ENCODE measurements at regions of chr2 and their contacts with region 1.

Region 1: DNA sequence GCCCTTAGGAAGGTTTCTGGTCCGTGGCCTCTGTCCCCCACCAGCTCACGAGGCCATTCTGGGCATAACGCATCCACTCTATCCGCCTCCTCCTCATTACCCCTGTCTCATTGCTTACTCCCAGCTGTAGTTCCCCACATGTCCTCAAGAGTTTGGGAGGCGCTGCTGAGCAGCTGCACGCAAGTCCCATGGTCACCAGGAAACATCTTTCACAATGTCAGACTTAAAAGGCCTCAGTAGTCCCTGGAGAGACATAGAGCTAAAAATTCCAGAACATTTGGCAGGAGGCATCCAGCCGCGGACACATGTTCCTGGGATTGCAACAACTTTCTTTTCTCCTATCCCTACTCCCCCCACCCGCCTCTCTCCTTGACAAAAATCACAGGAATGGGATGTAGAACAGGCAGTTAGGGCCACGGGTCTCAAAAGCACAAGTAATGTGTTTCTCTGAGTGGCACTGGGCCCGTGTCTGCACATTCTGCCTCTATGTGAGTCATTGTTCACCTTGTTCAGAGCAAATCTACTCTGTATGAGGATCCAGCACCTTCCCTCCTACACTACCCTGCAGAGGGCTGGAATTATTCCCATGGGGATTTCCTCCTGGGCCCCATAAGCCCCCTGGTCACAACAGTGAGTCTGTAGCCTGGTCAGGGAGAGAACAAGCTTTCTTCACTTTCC is 8.1 kb downstream of the LBH start:
- DNase-seq: peak; percentile 82
- ATAC-seq: peak; percentile 42
- H3K4me3 Mint-ChIP-seq: peak overlapping the region; percentile 46
- H3K27ac Mint-ChIP-seq: peak overlapping the region; percentile 82
- H3K4me1 Mint-ChIP-seq: peaks cover 88% of the 10 kb centered on the region
- H3K27me3 Mint-ChIP-seq: no peaks in the 10 kb centered on the region

Region 2: GRCh38 chr2:30252723-30253701 is 13.6 kb after region 1 on chr2:
- CTCF ChIA-PET with region 1: interaction called, 268 read pairs
- POLR2A ChIA-PET with region 1: interaction called, 6 read pairs
- DNase-seq: peak; percentile 69
- ATAC-seq: peak; percentile 65
- H3K4me3 Mint-ChIP-seq: peak overlapping the region; percentile 9
- H3K27ac Mint-ChIP-seq: peak overlapping the region; percentile 75
- H3K4me1 Mint-ChIP-seq: peaks cover 89% of the 10 kb centered on the region
- H3K27me3 Mint-ChIP-seq: no peaks in the 10 kb centered on the region

Region 3: DNA sequence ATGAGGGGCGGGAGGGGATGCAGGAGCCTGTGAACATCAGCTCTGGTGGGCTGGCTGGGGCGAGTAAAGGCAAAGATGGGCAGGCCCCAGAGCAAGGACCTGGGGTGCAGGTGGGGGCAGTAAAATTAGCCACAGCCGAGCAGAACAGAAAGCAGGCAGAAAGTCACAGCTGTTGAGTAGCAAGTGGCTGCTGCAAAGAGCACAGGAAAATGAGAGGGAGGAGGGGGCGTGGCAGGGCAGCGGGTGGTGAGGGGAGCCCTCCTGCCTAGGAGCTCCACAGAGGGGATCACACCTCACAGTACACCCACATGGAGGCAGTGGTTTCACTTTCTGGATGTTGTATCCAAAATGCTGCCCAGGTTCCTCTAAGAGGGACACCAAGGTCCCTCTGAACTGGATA is 71.5 kb after region 1 on chr2:
- CTCF ChIA-PET with region 1: interaction called, 15 read pairs
- POLR2A ChIA-PET with region 1: no interaction called
- DNase-seq: no peak
- ATAC-seq: peak; percentile 30
- H3K4me3 Mint-ChIP-seq: no peak overlapping the region
- H3K27ac Mint-ChIP-seq: peak overlapping the region; percentile 73
- H3K4me1 Mint-ChIP-seq: peaks cover 40% of the 10 kb centered on the region
- H3K27me3 Mint-ChIP-seq: no peaks in the 10 kb centered on the region

Region 4: DNA sequence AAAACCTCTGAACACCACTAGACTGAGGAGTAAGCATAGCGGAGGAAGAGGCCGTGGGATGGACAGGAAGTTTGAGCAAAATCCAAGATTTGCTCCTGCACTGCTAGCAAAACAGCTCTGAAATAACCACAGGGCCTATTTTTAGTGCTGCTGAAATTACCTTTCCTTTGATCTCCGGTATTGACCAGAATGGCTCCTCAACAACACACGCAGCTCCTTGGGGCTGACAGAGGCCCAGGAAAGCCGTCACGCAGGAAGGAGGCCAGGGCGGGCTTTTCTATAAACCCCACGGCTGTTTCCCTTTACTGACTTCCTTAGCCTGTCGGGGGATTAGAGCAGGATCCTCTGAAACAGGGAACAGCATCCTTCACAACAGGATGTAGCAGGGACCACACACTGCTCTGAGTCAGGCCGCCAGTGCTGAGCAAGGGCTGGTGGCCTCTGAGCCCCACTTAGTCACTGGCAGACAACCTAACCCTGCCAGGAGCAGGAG is 126.8 kb after region 1 on chr2:
- CTCF ChIA-PET with region 1: interaction called, 13 read pairs
- POLR2A ChIA-PET with region 1: no interaction called
- DNase-seq: peak; percentile 49
- ATAC-seq: peak; percentile 78
- H3K4me3 Mint-ChIP-seq: no peak overlapping the region
- H3K27ac Mint-ChIP-seq: peak overlapping the region; percentile 63
- H3K4me1 Mint-ChIP-seq: peaks cover 42% of the 10 kb centered on the region
- H3K27me3 Mint-ChIP-seq: no peaks in the 10 kb centered on the region

Region 5: DNA sequence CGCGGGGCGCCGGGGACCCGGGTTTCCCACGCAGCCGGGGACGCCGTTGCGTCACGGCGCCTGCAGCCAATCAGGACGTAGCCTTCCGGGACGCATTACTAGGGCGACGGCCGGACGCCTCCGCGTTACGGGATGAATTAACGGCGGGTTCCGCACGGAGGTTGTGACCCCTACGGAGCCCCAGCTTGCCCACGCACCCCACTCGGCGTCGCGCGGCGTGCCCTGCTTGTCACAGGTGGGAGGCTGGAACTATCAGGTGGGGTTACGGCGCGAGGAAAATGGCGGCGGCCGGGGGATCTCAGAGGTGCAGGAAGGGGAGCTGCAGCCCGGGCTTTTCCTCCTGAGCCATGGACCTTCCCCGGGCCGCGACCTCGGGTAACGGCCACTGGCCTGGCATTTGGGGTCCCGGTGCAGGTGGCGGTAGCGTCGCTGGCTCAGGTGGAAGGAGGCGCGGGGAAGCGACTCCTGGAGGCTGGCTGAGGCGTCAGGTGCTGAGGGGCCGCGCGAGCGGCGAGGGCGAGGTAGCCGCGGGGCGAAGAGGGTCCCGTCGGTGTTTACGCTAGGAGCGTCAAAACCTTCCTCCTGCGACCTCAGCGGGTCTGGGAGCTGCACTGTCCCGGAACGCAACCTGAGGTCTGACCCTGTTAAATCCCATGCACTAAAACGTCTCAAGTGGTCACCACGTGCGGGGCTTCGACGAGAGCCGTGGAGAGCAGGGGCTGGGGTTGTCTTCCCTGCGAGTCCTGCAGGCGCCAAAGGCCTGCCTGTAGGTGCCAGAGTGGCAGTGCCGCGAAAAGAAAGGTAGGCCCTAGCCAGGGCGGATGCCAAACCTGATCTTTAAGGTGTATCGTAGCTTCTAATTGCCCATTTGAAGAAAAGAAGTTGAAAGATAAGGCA is 207.9 kb after region 1 on chr2 and contains the start of gene LCLAT1:
- CTCF ChIA-PET with region 1: interaction called, 22 read pairs
- POLR2A ChIA-PET with region 1: interaction called, 24 read pairs
- DNase-seq: peak; percentile 86
- ATAC-seq: peak; percentile 95
- H3K4me3 Mint-ChIP-seq: peak within 1 kb of the TSS; percentile 93
- H3K27ac Mint-ChIP-seq: peak within 1 kb of the TSS; percentile 97
- H3K4me1 Mint-ChIP-seq: peaks cover 27% of the 10 kb centered on the region
- H3K27me3 Mint-ChIP-seq: no peaks in the 10 kb centered on the region
- total RNA-seq, gene LCLAT1: 25.1 to 25.3 TPM

Region 6: GRCh38 chr2:30499681-30500080 is 260.2 kb after region 1 on chr2:
- CTCF ChIA-PET with region 1: no interaction called
- POLR2A ChIA-PET with region 1: no interaction called
- DNase-seq: no peak
- ATAC-seq: no peak
- H3K4me3 Mint-ChIP-seq: no peak overlapping the region
- H3K27ac Mint-ChIP-seq: no peak overlapping the region
- H3K4me1 Mint-ChIP-seq: peaks cover 21% of the 10 kb centered on the region
- H3K27me3 Mint-ChIP-seq: no peaks in the 10 kb centered on the region

Measured in activated CD8-positive, alpha-beta T cell treated with anti-CD3 and anti-CD28 coated beads, Interleukin-2, amount 10 ng/mL, durations not matched to agents 7 days and 5 days (primary cell).